MCF 10A (cell line): ENCODE measurements at regions of chr9 and their contacts with region 1.

Region 1: DNA sequence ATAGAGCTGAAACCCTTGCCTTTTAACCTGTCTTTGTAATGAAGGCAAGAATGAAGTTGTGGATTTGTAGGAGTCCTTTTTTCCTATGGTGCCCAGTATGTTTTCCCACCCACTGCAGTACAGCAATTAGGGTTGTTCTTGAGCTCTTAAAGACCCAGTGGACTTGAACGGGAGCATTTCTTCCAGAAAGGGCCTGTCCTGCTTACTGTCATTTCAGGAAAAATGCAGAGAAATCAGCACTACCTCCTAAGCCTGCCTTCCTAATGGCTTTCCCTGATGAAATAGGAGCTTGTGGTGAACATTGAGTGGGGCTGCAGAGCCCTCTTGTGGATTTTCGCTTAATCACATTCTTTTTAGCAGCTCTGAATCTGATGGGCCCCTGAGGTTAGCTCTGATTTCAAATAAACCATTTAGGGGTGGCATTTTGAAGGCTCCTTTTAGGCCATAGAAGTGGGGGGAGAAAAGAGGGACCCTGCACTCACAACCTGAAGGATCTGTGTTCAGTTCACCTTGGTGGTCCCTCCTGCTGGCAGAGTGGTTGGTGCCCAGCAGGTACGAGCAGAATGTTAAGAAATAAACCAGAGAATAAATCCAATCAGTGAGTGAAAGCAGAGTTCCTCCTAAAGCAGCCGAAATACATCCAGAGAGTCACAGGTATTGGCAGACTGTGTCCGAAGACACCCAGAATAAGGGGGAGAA is 188.0 kb upstream of the KLF9 start:
- DNase-seq: peak; percentile 83
- H3K4me3 Mint-ChIP-seq: no peak overlapping the region
- H3K27ac Mint-ChIP-seq: no peak overlapping the region
- H3K4me1 Mint-ChIP-seq: peaks cover 12% of the 10 kb centered on the region
- H3K27me3 Mint-ChIP-seq: no peaks in the 10 kb centered on the region
- CTCF ChIP-seq: peak; percentile 77

Region 2: GRCh38 chr9:69759421-69760277 is 842.8 kb before region 1 on chr9 and contains the start of gene PTAR1:
- CTCF ChIA-PET with region 1: no interaction called
- POLR2A ChIA-PET with region 1: no interaction called
- intact Hi-C with region 1: loop called (anchors 10 kb)
- DNase-seq: peak; percentile 89
- H3K4me3 Mint-ChIP-seq: peak within 1 kb of the TSS; percentile 89
- H3K27ac Mint-ChIP-seq: peak within 1 kb of the TSS; percentile 73
- H3K4me1 Mint-ChIP-seq: peaks cover 6% of the 10 kb centered on the region
- H3K27me3 Mint-ChIP-seq: no peaks in the 10 kb centered on the region
- CTCF ChIP-seq: no peak
- total RNA-seq, gene PTAR1: 41.4 and 43.5 TPM in 2 replicates

Region 3: DNA sequence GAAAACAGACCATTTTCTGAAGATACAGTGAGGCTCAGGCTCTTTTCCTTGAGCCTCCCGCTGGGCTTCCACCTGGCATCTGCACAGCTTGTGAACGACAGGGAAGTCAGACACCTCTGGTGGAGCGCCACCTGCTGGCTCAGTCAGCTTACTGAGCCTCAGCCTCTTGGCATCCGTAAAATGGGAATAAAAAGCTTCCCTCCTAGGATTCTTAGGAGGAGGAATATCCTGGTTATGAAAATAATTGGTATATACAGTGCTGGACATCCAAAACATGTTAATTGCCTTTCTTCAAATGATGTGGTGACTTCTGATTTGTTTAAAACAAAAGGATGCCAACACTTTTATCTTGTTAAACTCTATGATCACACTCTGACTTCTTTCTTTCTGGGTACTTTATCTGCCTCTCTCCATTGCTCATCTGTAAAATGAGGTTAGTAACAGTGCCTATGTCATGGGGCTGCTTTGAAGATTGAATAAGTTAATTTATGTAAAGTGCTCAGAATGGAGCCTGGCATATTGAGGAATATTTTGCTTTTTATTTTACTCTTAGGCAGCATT is 491.3 kb before region 1 on chr9:
- CTCF ChIA-PET with region 1: interaction called, 23 read pairs
- POLR2A ChIA-PET with region 1: interaction called, 4 read pairs
- intact Hi-C with region 1: loop called (anchors 1 kb)
- DNase-seq: peak; percentile 79
- H3K4me3 Mint-ChIP-seq: no peak overlapping the region
- H3K27ac Mint-ChIP-seq: no peak overlapping the region
- H3K4me1 Mint-ChIP-seq: peaks cover 30% of the 10 kb centered on the region
- H3K27me3 Mint-ChIP-seq: no peaks in the 10 kb centered on the region
- CTCF ChIP-seq: peak; percentile 80

Region 4: DNA sequence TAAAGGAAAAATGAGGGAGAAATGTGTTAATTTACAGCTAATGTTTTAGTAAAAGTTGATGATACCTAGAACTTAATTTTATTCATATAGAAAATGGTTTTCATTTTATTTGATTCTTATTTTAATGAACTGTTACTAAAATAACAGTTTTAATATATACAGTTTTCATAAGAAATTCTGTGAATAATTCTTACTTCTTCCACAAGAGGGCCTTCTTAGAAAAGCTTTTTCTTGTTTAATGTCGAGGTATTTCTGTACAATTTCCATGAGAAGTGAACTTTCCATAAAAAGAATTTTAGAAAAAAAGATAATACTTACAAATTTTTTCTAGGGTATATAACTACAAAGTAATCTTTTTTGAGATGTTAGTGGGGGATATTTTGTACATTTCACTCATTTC is 261.9 kb before region 1 on chr9:
- CTCF ChIA-PET with region 1: interaction called, 129 read pairs
- POLR2A ChIA-PET with region 1: interaction called, 21 read pairs
- intact Hi-C with region 1: loop called (anchors 1 kb)
- DNase-seq: peak; percentile 25
- H3K4me3 Mint-ChIP-seq: no peak overlapping the region
- H3K27ac Mint-ChIP-seq: no peak overlapping the region
- H3K4me1 Mint-ChIP-seq: no peaks in the 10 kb centered on the region
- H3K27me3 Mint-ChIP-seq: no peaks in the 10 kb centered on the region
- CTCF ChIP-seq: peak; percentile 23

Region 5: DNA sequence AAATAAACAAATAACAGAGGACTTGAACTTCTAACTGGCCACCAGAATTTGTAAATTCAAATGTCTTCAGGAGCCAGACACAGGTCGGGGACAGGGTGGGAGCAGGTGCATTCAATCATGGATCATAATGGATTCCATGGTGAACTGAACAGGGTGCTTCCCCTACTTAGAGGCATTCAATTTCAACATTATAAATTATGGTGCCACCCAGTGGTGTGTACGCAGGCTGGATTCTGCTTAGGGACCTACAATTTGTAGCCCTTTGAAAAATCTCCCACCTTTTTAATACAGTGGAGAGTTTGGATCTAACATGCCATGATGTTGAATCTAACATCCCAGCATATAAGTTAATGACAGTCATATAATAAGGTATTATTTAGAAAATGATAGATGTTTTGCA is 210.3 kb before region 1 on chr9:
- CTCF ChIA-PET with region 1: interaction called, 19 read pairs
- POLR2A ChIA-PET with region 1: interaction called, 3 read pairs
- intact Hi-C with region 1: no loop called
- DNase-seq: peak; percentile 18
- H3K4me3 Mint-ChIP-seq: no peak overlapping the region
- H3K27ac Mint-ChIP-seq: no peak overlapping the region
- H3K4me1 Mint-ChIP-seq: peaks cover 21% of the 10 kb centered on the region
- H3K27me3 Mint-ChIP-seq: no peaks in the 10 kb centered on the region
- CTCF ChIP-seq: peak; percentile 13

Region 6: GRCh38 chr9:70478963-70479641 is 123.4 kb before region 1 on chr9:
- CTCF ChIA-PET with region 1: interaction called, 15 read pairs
- POLR2A ChIA-PET with region 1: interaction called, 12 read pairs
- intact Hi-C with region 1: loop called (anchors 1 kb)
- DNase-seq: peak; percentile 73
- H3K4me3 Mint-ChIP-seq: peak overlapping the region; percentile 46
- H3K27ac Mint-ChIP-seq: peak overlapping the region; percentile 99
- H3K4me1 Mint-ChIP-seq: peaks cover 51% of the 10 kb centered on the region
- H3K27me3 Mint-ChIP-seq: no peaks in the 10 kb centered on the region
- CTCF ChIP-seq: no peak